OCI-LY7 (cell line): ENCODE measurements at regions of chr2 and their contacts with region 1.

Region 1: GRCh38 chr2:203650860-203651613 is 55.4 kb upstream of the CD28 start:
- DNase-seq: peak; percentile 84
- H3K4me3 ChIP-seq: no peak overlapping the region
- H3K27ac ChIP-seq: peak overlapping the region; percentile 55
- H3K4me1 ChIP-seq: peaks cover 56% of the 10 kb centered on the region
- CTCF ChIP-seq: peak; percentile 89

Region 2: DNA sequence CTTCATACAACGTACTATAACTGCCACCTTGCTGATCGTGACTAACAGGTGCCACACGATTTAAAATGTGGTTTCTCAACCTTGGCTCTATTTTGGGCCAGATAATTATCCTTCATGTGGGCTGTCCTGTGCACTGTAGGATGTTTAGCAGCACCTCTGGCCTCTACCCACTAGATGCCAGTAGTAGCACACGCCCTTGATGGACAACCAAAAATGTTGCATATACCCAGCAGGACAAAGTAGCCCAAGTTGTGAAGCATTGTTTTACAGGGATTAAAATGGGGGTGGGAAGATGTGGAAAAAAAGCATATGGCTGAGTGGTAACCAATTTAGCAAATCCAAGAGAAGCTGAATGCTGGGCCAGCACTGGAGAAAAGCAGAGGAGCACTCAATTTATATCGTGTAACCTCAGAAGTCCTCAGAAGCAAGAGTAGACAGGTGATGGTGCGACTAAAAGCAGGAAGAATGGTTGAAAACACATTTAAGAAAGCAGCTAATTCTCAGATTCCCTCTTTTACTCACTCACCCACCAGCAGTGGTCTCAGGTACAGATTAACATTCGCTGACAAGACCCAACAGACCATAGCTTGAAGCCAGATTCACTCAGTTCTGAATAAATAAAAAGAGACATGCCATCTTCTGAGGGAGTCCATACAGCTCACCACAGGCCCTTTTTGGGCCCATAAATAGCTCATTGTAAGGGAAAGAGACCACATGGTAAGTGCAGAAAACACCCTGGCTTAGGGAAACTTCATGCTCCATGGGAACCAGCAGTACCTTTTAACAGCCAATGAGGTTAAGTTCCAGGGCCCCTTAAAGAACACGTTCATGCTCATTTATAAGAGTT is 166.5 kb before region 1 on chr2:
- CTCF ChIA-PET with region 1: interaction called, 6 read pairs
- POLR2A ChIA-PET with region 1: interaction called, 5 read pairs
- intact Hi-C with region 1: loop called (anchors 1 kb)
- DNase-seq: peak; percentile 82
- H3K4me3 ChIP-seq: no peak overlapping the region
- H3K27ac ChIP-seq: peak overlapping the region; percentile 48
- H3K4me1 ChIP-seq: peaks cover 25% of the 10 kb centered on the region
- CTCF ChIP-seq: peak; percentile 99

Region 3: GRCh38 chr2:203583701-203584100 is 67.3 kb before region 1 on chr2:
- CTCF ChIA-PET with region 1: no interaction called
- POLR2A ChIA-PET with region 1: interaction called, 4 read pairs
- intact Hi-C with region 1: loop called (anchors 2 kb)
- DNase-seq: peak; percentile 81
- H3K4me3 ChIP-seq: peak overlapping the region; percentile 51
- H3K27ac ChIP-seq: peak overlapping the region; percentile 92
- H3K4me1 ChIP-seq: peaks cover 78% of the 10 kb centered on the region
- CTCF ChIP-seq: no peak

Region 4: DNA sequence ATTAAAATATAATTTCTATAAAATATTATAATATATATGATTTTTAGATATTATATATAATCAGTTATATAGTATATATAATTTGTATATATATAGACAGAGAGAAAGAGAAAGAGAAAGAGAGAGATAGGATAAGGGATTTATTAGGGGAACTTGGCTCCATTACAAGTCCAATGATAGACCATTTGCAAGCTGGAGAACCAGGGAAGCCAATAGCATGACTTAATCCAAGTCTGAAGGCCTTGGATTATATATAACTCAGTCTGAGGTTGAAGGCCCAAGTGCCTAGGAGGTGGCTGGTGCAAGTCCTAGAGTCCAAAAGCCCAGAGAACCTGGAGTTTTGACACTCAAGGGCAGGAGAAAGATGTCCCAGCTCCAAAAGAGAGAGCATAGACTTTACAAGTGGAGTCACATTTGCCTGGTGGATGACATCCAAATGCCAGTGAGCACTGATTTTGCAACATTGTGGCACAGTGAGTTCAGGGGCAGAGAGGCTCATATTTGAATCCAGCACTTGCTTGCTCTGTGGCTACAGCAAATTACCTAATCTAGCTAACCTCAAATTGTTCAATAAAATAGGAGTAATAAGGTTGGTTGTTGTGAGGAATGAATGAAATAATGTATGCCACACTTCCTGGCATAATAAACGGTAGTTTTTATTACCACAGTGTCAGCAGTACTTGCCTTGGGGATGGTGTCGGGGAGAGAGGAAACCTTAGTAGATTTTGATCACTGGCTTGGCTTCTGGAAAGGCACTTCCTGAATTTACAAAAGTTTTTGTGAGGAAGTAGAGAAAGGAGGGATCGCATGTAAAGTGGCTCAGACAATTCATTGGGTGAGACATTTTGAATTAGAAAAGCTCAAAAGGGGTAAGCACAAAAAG is 14.2 kb before region 1 on chr2:
- CTCF ChIA-PET with region 1: no interaction called
- POLR2A ChIA-PET with region 1: interaction called, 27 read pairs
- intact Hi-C with region 1: no loop called
- DNase-seq: no peak
- H3K4me3 ChIP-seq: no peak overlapping the region
- H3K27ac ChIP-seq: no peak overlapping the region
- H3K4me1 ChIP-seq: peaks cover 16% of the 10 kb centered on the region
- CTCF ChIP-seq: no peak

Region 5: GRCh38 chr2:203909261-203909967 is 258.4 kb after region 1 on chr2:
- CTCF ChIA-PET with region 1: no interaction called
- POLR2A ChIA-PET with region 1: no interaction called
- intact Hi-C with region 1: loop called (anchors 5 kb)
- DNase-seq: peak; percentile 42
- H3K4me3 ChIP-seq: no peak overlapping the region
- H3K27ac ChIP-seq: no peak overlapping the region
- H3K4me1 ChIP-seq: peaks cover 7% of the 10 kb centered on the region
- CTCF ChIP-seq: peak; percentile 93